WTC11 (cell line): ENCODE measurements at regions of chr2 and their contacts with region 1.

Region 1: DNA sequence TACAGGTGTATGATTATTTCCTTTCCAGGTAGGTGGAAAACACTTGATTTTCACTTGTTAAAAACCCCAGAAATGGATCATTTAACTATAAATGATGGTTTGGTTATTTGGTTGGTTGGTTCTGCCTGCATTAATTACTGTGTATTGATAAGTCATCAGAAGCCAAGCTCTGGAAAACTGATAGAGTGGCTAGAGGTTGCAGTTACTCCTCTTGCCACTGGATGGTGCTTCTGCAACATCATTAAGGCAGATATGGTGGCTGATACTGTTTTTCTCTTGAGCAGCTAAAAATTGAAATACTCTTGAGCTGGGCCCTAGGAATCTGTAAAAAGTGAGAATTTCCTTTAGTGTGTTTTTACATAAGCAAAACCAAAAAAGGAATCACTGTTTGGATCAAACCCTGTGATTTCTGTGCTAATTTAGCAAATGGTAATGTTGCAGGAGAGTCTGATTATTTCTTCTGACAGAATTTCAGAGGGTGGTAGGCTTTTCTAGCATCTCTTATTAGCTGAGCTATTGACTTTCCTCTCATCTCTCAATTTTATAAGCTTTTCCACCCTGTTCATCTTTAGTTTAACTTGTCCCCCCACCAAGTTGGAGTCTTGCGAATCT is 54.3 kb downstream of the RAB10 start:
- DNase-seq: no peak
- ATAC-seq: peak; percentile 78
- H3K4me3 Mint-ChIP-seq: no peak overlapping the region
- H3K27ac Mint-ChIP-seq: peak overlapping the region; percentile 47; the same call in 1 of the 2 replicates
- H3K4me1 Mint-ChIP-seq: peaks cover 49% of the 10 kb centered on the region
- H3K27me3 Mint-ChIP-seq: no peaks in the 10 kb centered on the region
- CTCF ChIP-seq: peak; percentile 72

Region 2: GRCh38 chr2:25991965-25992364 is 96.2 kb before region 1 on chr2:
- CTCF ChIA-PET with region 1: interaction called, 10 read pairs
- POLR2A ChIA-PET with region 1: no interaction called
- DNase-seq: no peak
- ATAC-seq: no peak
- H3K4me3 Mint-ChIP-seq: no peak overlapping the region
- H3K27ac Mint-ChIP-seq: no peak overlapping the region
- H3K4me1 Mint-ChIP-seq: no peaks in the 10 kb centered on the region
- H3K27me3 Mint-ChIP-seq: no peaks in the 10 kb centered on the region; the same call in 1 of the 2 replicates
- CTCF ChIP-seq: no peak

Region 3: GRCh38 chr2:26072925-26073768 is 15.0 kb before region 1 on chr2:
- CTCF ChIA-PET with region 1: interaction called, 15 read pairs
- POLR2A ChIA-PET with region 1: no interaction called
- DNase-seq: no peak
- ATAC-seq: peak; percentile 74
- H3K4me3 Mint-ChIP-seq: no peak overlapping the region
- H3K27ac Mint-ChIP-seq: peak overlapping the region; percentile 67
- H3K4me1 Mint-ChIP-seq: peaks cover 58% of the 10 kb centered on the region
- H3K27me3 Mint-ChIP-seq: no peaks in the 10 kb centered on the region
- CTCF ChIP-seq: no peak

Region 4: DNA sequence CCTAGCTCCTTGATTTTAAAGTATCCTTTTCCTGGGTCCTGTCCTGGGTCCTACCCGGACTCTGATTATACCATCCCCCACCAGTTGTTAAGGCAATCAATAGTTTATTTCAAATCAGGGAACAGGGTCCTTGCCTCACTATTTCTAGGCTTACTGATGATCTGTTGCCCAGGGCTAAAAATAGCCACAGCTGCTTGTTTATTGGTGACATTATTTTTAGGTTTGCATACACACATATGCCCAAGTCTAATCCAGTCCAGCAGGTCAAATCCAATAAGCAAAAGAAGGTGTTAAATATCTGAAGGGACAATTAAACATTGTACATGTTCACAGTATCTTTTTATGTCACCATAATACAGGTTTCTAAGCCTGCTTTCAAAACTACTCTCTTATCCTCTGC is 11.8 kb after region 1 on chr2:
- CTCF ChIA-PET with region 1: interaction called, 17 read pairs
- POLR2A ChIA-PET with region 1: interaction called, 3 read pairs
- DNase-seq: no peak
- ATAC-seq: no peak
- H3K4me3 Mint-ChIP-seq: no peak overlapping the region
- H3K27ac Mint-ChIP-seq: peak overlapping the region; percentile 47
- H3K4me1 Mint-ChIP-seq: peaks cover 18% of the 10 kb centered on the region
- H3K27me3 Mint-ChIP-seq: no peaks in the 10 kb centered on the region
- CTCF ChIP-seq: no peak

Region 5: GRCh38 chr2:26144953-26145680 is 57.0 kb after region 1 on chr2:
- CTCF ChIA-PET with region 1: interaction called, 16 read pairs
- POLR2A ChIA-PET with region 1: interaction called, 4 read pairs
- DNase-seq: peak; percentile 74
- ATAC-seq: peak; percentile 76
- H3K4me3 Mint-ChIP-seq: no peak overlapping the region
- H3K27ac Mint-ChIP-seq: no peak overlapping the region
- H3K4me1 Mint-ChIP-seq: peaks cover 4% of the 10 kb centered on the region
- H3K27me3 Mint-ChIP-seq: no peaks in the 10 kb centered on the region
- CTCF ChIP-seq: peak; percentile 65

Region 6: DNA sequence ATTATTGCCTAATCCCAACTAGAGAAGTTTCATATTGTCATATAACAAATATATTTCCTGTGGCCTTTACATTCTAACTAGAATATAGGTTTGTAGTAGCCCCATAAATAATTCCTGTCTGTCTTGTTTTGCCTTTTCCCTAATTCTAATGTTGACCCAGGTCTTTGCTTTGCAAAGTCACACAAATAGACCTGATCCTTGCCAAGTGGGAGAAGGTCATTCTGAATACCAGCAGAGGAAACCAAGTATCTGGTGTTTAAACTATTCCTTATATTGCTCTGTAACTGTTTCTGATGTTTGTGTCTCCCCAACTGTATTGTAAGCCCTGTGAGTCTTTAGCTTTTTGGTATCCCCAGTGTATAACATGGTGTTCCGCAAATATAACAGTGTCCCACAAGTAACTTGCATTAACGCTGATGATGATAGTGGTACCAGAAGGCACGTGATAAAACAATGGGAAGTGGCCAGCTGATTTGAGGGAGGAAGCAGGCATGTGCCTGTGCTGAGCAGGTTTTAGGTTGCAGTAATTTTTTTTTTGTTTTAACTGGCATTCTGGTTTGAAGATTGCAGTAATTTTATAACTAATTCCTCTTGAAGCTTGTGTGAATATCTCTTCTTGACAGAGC is 167.7 kb after region 1 on chr2:
- CTCF ChIA-PET with region 1: no interaction called
- POLR2A ChIA-PET with region 1: no interaction called
- DNase-seq: no peak
- ATAC-seq: no peak
- H3K4me3 Mint-ChIP-seq: no peak overlapping the region
- H3K27ac Mint-ChIP-seq: no peak overlapping the region
- H3K4me1 Mint-ChIP-seq: 0 out of 2 replicates have a peak, but pooled peaks cover 3% of the 10 kb centered on the region
- H3K27me3 Mint-ChIP-seq: no peaks in the 10 kb centered on the region
- CTCF ChIP-seq: no peak